ENCODE measurements at regions of chr2 and their contacts with region 1.

Region 1: DNA sequence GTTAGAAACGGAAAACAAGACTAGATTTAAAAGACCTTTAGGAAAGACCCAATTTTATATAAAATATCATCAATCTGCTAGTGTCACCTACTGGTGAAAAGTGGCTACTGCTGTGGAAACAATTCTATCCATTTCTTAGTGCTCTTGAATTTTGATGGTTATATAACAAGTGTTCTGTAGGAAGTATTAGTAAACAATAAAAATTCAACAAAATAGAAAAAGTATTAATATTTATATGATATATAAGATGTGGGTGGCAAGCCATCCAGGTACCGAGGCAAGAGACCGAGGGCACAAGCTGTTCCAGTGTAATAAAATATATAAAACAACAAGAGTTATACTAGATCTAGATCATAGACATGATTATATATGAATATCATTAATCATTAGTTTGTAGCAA is 6.2 kb upstream of the TMEM87B start:
- DNase-seq: no peak
- ATAC-seq: peak; percentile 62

Region 2: GRCh38 chr2:111897924-111898702 is 150.8 kb before region 1 on chr2 and contains the start of gene MERTK:
- intact Hi-C with region 1: loop called (anchors 5 kb)
- DNase-seq: peak; percentile 77 to 82
- ATAC-seq: peak; percentile 86
- total RNA-seq, gene MERTK: 9.0 to 9.2 TPM

Region 3: GRCh38 chr2:112204411-112204810 is 155.5 kb after region 1 on chr2:
- intact Hi-C with region 1: no loop called
- DNase-seq: no peak
- ATAC-seq: no peak